PC-3 (cell line): ENCODE measurements at regions of chr5 and their contacts with region 1.

Region 1: GRCh38 chr5:140261403-140262171 is 41.3 kb downstream of the PFDN1 start:
- DNase-seq: peak; percentile 86
- ATAC-seq: peak; percentile 92
- H3K4me3 ChIP-seq: peak overlapping the region; percentile 15; the same call in 1 of the 2 replicates
- H3K27ac ChIP-seq: peak overlapping the region; percentile 87
- H3K4me1 ChIP-seq: peaks cover 26% of the 10 kb centered on the region
- H3K27me3 ChIP-seq: no peaks in the 10 kb centered on the region
- CTCF ChIP-seq: peak; percentile 39; the same call in 1 of the 2 replicates

Region 2: GRCh38 chr5:139038613-139039305 is 1222.8 kb before region 1 on chr5:
- CTCF ChIA-PET with region 1: no interaction called
- POLR2A ChIA-PET with region 1: no interaction called
- intact Hi-C with region 1: no loop called
- DNase-seq: no peak
- ATAC-seq: no peak
- H3K4me3 ChIP-seq: no peak overlapping the region
- H3K27ac ChIP-seq: no peak overlapping the region
- H3K4me1 ChIP-seq: no peaks in the 10 kb centered on the region
- H3K27me3 ChIP-seq: no peaks in the 10 kb centered on the region
- CTCF ChIP-seq: peak; percentile 30; the same call in 1 of the 2 replicates

Region 3: GRCh38 chr5:140012443-140012842 is 249.1 kb before region 1 on chr5:
- CTCF ChIA-PET with region 1: interaction called, 13 read pairs
- POLR2A ChIA-PET with region 1: no interaction called
- intact Hi-C with region 1: no loop called
- DNase-seq: no peak
- ATAC-seq: no peak
- H3K4me3 ChIP-seq: no peak overlapping the region
- H3K27ac ChIP-seq: no peak overlapping the region
- H3K4me1 ChIP-seq: peaks cover 21% of the 10 kb centered on the region
- H3K27me3 ChIP-seq: no peaks in the 10 kb centered on the region
- CTCF ChIP-seq: no peak

Region 4: GRCh38 chr5:140244525-140245025 is 17.0 kb before region 1 on chr5:
- CTCF ChIA-PET with region 1: interaction called, 31 read pairs
- POLR2A ChIA-PET with region 1: no interaction called
- intact Hi-C with region 1: no loop called
- DNase-seq: peak; percentile 93
- ATAC-seq: peak; percentile 41
- H3K4me3 ChIP-seq: no peak overlapping the region
- H3K27ac ChIP-seq: peak overlapping the region; percentile 90
- H3K4me1 ChIP-seq: peaks cover 55% of the 10 kb centered on the region
- H3K27me3 ChIP-seq: no peaks in the 10 kb centered on the region
- CTCF ChIP-seq: peak; percentile 88

Region 5: GRCh38 chr5:140295414-140295813 is 33.8 kb after region 1 on chr5:
- CTCF ChIA-PET with region 1: interaction called, 5 read pairs
- POLR2A ChIA-PET with region 1: interaction called, 8 read pairs
- intact Hi-C with region 1: loop called (anchors 5 kb)
- DNase-seq: peak; percentile 96
- ATAC-seq: peak; percentile 52
- H3K4me3 ChIP-seq: no peak overlapping the region
- H3K27ac ChIP-seq: peak overlapping the region; percentile 7; the same call in 1 of the 2 replicates
- H3K4me1 ChIP-seq: peaks cover 82% of the 10 kb centered on the region
- H3K27me3 ChIP-seq: no peaks in the 10 kb centered on the region
- CTCF ChIP-seq: no peak

Region 6: DNA sequence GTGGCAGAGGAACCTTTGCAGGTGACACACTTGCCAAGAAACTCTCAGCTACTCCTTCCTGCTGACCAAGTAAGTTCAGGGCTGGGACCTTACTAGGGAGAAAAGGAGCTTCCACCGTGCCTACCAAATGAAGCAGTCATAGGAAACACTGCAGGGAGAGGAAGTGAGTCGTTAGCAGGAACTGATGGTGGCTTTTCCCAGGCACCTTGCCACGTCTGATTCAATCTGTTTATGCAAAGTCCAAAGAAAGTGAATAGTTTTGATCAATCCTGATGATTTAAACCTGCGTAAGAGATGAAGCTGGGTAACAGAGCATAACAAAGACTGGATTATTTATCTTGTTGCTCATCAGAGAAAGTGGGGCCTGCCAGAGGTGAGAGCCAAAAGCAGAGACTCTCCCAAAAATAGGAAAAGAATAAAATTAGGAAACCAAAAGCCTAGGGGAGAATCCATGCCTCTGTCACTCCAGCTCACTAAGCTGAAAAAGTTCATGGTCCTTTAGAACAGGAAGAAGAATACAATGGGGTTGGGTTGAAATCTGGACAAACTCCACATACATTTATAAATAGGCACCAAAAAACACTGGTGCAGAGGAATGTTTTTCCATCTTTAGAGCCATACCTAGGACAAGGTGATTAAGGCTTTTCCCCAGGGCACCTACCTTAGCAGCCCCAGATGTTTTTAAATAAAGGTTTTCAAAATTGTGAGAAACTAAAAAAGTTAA is 50.6 kb after region 1 on chr5:
- CTCF ChIA-PET with region 1: interaction called, 4 read pairs
- POLR2A ChIA-PET with region 1: interaction called, 6 read pairs
- intact Hi-C with region 1: loop called (anchors 5 kb)
- DNase-seq: peak; percentile 98
- ATAC-seq: peak; percentile 93
- H3K4me3 ChIP-seq: no peak overlapping the region; the same call in 1 of the 2 replicates
- H3K27ac ChIP-seq: peak overlapping the region; percentile 98
- H3K4me1 ChIP-seq: peaks cover 41% of the 10 kb centered on the region
- H3K27me3 ChIP-seq: no peaks in the 10 kb centered on the region
- CTCF ChIP-seq: no peak

Region 7: DNA sequence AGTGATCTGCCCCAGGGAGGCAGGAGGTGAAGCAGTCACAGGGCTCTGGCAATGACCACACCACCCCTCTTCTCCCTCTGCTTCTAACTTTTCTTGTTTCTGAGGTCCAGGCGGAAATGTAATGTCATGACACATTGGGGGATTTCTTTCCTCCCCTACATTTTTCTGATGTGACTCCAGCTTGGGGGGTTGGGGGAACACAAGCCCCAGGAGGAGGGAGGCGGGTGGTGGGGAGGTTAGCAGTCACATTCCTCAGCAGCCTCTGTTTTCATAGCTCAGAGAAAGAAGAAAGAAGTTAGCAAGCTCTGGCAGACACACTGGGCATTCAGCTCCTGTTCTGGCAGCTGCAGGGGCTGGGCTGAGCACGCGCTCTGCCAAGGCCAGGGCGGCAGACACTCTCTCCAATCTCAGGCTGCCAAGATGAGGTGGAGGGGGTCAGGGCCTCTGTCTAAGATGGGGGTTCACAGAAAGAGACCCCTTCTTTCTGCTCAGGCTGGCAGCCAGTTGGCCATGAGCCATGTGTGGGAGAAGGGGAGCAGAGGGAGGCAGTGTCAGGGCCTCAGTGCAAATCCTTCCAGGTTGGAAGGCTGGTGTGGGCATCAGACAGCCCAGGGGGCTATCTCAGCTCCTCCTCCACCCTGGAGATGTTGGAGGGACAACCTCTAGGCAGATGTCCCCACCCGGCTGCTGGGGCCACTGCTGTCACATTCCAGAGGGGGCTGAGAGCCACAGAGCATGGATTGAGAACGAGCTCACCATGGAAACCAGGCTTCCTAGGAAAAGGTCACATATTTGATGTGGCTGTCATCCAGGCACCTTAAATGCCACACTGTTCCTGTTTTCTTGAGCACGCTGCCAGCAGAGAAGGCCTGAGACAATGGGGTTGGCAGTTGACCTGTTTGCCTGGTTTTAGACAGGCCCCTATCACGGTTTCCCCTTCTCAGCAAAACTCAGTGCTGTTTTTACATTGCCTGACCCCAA is 61.5 kb after region 1 on chr5:
- CTCF ChIA-PET with region 1: interaction called, 4 read pairs
- POLR2A ChIA-PET with region 1: interaction called, 16 read pairs
- intact Hi-C with region 1: no loop called
- DNase-seq: peak; percentile 93
- ATAC-seq: peak; percentile 76
- H3K4me3 ChIP-seq: peak overlapping the region; percentile 22; the same call in 1 of the 2 replicates
- H3K27ac ChIP-seq: peak overlapping the region; percentile 98
- H3K4me1 ChIP-seq: peaks cover 54% of the 10 kb centered on the region
- H3K27me3 ChIP-seq: no peaks in the 10 kb centered on the region
- CTCF ChIP-seq: no peak

Region 8: DNA sequence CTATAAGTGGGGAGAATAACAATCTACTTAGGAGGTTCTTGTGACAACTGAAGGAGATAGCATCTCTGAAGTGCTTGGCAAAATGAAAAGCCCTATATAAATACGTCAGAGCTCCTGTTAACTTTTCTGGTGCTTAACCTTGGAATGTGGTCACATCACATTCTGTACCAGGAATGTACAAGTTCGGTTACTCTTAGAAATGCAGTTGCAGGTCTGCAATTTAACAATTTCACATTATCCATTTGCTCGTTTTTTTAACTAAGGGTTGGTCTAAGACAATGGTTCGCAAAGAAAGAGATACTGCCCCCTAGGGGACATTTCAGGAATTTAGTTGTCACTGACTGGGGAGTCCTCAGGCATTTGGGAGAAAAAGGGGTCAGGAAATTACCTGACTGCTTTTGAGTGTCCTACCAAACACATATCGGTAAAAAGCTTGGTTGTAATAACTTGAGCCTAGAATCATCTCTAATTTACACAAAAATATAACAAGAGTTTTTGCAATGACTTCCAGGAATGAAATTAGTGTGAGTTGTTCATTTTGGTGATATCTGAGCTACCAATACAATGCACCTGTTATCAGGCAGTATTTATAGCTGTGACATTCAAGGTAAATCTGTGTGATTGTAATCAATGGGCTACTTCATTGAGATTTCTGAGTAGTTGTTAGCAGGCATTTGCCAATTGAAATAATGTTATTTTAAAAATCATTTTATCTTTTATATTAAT is 90.2 kb after region 1 on chr5:
- CTCF ChIA-PET with region 1: interaction called, 40 read pairs
- POLR2A ChIA-PET with region 1: interaction called, 21 read pairs
- intact Hi-C with region 1: loop called (anchors 1 kb)
- DNase-seq: peak; percentile 94
- ATAC-seq: peak; percentile 59
- H3K4me3 ChIP-seq: no peak overlapping the region
- H3K27ac ChIP-seq: no peak overlapping the region
- H3K4me1 ChIP-seq: peaks cover 30% of the 10 kb centered on the region
- H3K27me3 ChIP-seq: no peaks in the 10 kb centered on the region
- CTCF ChIP-seq: peak; percentile 93